Activated CD8-positive, alpha-beta T cell treated with anti-CD3 and anti-CD28 coated beads for 36 hours (primary cell): ENCODE measurements at regions of chr10 and their contacts with region 1.

Region 1: DNA sequence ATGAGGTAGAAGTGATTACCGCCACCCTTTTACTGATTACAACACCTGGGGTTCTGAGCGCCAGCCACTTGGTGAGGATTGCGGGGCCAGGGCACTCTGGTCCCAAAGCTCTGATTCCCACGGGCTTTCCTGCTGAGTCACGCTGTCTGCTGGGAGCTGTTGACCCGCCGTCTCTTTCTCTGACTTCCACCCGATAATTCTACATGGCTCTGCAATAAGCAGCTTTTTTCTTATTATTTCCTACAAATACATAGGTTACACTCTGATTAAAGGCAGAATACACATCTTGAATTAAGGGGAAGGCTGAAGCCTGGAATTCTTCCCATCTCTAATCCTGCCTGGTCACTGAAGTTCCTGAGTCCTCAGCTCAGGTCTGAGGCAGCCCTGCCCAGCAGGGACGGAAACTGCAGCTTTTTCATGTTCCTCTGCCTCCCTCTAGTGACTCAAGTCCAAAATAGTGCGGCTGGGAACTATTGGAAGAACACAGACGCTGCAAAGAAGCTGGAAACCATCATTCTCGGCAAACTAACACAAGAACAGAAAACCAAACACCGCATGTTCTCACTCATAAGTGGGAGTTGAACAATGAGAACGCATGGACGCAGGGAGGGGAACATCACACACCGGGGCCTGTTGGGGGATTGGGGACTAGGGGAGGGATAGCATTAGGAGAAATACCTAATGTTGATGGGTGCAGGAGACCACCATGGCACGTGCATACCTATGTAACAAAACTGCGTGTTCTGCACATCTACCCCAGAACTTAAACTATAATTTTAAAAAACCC is 178.3 kb downstream of the PRKCQ start:
- DNase-seq: peak; percentile 71
- ATAC-seq: peak; percentile 83
- H3K4me3 Mint-ChIP-seq: peak overlapping the region; percentile 1
- H3K27ac Mint-ChIP-seq: no peak overlapping the region
- H3K4me1 Mint-ChIP-seq: peaks cover 37% of the 10 kb centered on the region
- H3K27me3 Mint-ChIP-seq: peaks cover 4% of the 10 kb centered on the region
- CTCF ChIP-seq: peak; percentile 67

Region 2: GRCh38 chr10:6108603-6109443 is 292.9 kb before region 1 on chr10:
- CTCF ChIA-PET with region 1: interaction called, 66 read pairs
- POLR2A ChIA-PET with region 1: no interaction called
- intact Hi-C with region 1: loop called (anchors 2 kb)
- DNase-seq: peak; percentile 32
- ATAC-seq: peak; percentile 76
- H3K4me3 Mint-ChIP-seq: no peak overlapping the region
- H3K27ac Mint-ChIP-seq: peak overlapping the region; percentile 86
- H3K4me1 Mint-ChIP-seq: peaks cover 36% of the 10 kb centered on the region
- H3K27me3 Mint-ChIP-seq: no peaks in the 10 kb centered on the region
- CTCF ChIP-seq: peak; percentile 93

Region 3: GRCh38 chr10:6163364-6164270 is 238.1 kb before region 1 on chr10:
- CTCF ChIA-PET with region 1: interaction called, 13 read pairs
- POLR2A ChIA-PET with region 1: no interaction called
- intact Hi-C with region 1: no loop called
- DNase-seq: peak; percentile 90
- ATAC-seq: peak; percentile 97
- H3K4me3 Mint-ChIP-seq: peak overlapping the region; percentile 93
- H3K27ac Mint-ChIP-seq: peak overlapping the region; percentile 93
- H3K4me1 Mint-ChIP-seq: peaks cover 57% of the 10 kb centered on the region
- H3K27me3 Mint-ChIP-seq: no peaks in the 10 kb centered on the region
- CTCF ChIP-seq: no peak

Region 4: GRCh38 chr10:6232846-6233724 is 168.7 kb before region 1 on chr10:
- CTCF ChIA-PET with region 1: interaction called, 24 read pairs
- POLR2A ChIA-PET with region 1: interaction called, 3 read pairs
- intact Hi-C with region 1: no loop called
- DNase-seq: no peak
- ATAC-seq: no peak
- H3K4me3 Mint-ChIP-seq: no peak overlapping the region
- H3K27ac Mint-ChIP-seq: no peak overlapping the region
- H3K4me1 Mint-ChIP-seq: peaks cover 6% of the 10 kb centered on the region
- H3K27me3 Mint-ChIP-seq: no peaks in the 10 kb centered on the region
- CTCF ChIP-seq: no peak

Region 5: DNA sequence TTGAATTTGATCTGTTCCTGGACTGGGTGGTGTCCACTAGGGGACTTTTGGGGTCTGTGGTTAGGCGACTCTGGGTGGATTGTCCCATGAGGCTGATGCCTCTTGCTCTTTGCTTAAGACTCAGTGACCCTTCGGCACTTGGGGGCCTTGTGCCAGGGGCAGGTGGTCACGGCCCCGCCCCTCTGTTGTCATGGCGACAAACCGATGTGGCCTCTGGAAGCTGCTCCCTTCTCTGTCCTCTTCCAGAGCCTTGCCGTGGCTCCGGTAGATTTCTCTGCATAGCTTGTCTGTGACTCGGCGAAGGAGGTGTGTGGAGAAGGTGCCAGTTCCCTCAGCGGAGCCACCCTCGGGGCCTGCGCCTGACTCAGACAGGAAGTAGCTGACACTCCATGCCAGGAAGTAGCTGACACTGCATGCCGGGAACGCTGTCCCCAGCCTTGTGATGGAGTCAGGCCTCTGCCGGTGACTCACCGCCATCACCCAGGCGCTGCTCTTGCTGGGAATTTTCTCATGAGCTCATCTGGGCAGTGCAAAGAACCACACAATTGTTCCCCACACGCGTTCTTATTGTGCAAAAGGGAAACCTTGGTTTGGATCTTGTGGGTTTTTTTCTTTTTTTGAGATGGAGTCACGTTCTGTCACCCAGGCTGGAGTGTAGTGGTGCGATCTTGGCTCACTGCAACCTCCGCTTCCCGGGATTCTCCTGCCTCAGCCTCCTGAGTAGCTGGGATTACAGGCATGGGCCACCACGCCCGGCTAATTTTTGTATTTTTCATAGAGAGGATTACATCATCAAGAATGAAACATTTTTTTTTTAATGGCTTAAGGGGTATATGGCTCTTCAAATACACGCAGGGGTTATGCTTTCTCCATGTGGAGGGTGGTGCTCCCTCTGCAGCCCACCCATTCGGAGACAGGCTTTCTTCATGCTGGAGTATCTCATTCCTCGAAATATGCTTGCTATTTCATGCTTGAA is 126.4 kb before region 1 on chr10:
- CTCF ChIA-PET with region 1: interaction called, 13 read pairs
- POLR2A ChIA-PET with region 1: no interaction called
- intact Hi-C with region 1: no loop called
- DNase-seq: peak; percentile 96
- ATAC-seq: peak; percentile 85
- H3K4me3 Mint-ChIP-seq: peak overlapping the region; percentile 72
- H3K27ac Mint-ChIP-seq: peak overlapping the region; percentile 96
- H3K4me1 Mint-ChIP-seq: peaks cover 49% of the 10 kb centered on the region
- H3K27me3 Mint-ChIP-seq: no peaks in the 10 kb centered on the region
- CTCF ChIP-seq: no peak

Region 6: DNA sequence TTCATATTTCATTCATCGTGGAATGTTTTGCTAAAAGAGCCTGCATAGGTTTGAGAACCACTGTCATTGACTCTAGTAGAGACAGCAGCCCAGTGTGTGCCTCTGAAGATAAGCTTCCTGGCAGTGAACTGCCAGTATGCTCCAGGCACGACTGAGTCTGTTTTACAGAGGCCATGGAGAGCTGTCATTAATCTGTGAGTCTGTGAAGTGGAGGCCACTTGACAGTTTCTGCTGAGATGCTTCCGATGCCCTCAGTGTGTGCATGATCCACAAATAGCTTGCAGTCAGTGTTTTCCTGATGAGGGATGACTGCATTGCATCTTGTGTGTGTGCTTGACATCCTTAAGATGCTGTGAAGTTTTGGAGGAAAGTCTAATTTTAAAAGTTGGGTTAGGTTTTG is 36.9 kb before region 1 on chr10:
- CTCF ChIA-PET with region 1: interaction called, 15 read pairs
- POLR2A ChIA-PET with region 1: no interaction called
- intact Hi-C with region 1: no loop called
- DNase-seq: no peak
- ATAC-seq: no peak
- H3K4me3 Mint-ChIP-seq: no peak overlapping the region
- H3K27ac Mint-ChIP-seq: no peak overlapping the region
- H3K4me1 Mint-ChIP-seq: no peaks in the 10 kb centered on the region
- H3K27me3 Mint-ChIP-seq: no peaks in the 10 kb centered on the region
- CTCF ChIP-seq: no peak

Region 7: GRCh38 chr10:6482737-6483357 is 81.1 kb after region 1 on chr10:
- CTCF ChIA-PET with region 1: no interaction called
- POLR2A ChIA-PET with region 1: no interaction called
- intact Hi-C with region 1: no loop called
- DNase-seq: no peak
- ATAC-seq: no peak
- H3K4me3 Mint-ChIP-seq: no peak overlapping the region
- H3K27ac Mint-ChIP-seq: peak overlapping the region; percentile 78
- H3K4me1 Mint-ChIP-seq: peaks cover 64% of the 10 kb centered on the region
- H3K27me3 Mint-ChIP-seq: no peaks in the 10 kb centered on the region
- CTCF ChIP-seq: no peak

Region 8: DNA sequence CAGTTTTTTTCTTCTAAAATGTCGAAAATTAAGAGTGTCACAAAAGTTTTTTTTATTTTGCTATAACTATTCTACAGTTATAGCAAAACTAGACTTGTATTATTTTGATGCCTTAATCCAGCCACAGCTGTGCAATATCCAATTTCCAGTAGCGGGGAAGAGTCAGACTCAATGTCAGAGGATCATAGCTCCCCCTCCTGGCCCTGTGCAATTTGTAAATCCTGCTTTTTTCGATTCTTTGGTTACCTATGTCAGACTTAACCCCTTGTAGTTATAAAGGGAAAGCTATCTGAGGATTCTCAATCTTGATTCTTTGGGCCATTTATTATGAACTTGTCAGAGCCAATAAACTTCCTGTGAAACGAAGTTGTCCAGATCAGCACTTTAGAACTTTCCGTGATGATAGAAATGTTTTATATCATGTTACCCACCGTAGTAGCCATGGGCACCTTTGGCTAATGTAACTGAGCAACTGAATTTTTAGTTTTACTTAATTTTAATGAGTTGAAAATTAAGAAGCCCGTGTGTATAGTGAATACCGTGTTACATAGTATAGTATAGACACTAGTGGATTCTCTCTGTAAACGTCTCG is 266.0 kb after region 1 on chr10:
- CTCF ChIA-PET with region 1: interaction called, 66 read pairs
- POLR2A ChIA-PET with region 1: no interaction called
- intact Hi-C with region 1: no loop called
- DNase-seq: peak; percentile 74
- ATAC-seq: peak; percentile 38
- H3K4me3 Mint-ChIP-seq: no peak overlapping the region
- H3K27ac Mint-ChIP-seq: no peak overlapping the region
- H3K4me1 Mint-ChIP-seq: peaks cover 24% of the 10 kb centered on the region
- H3K27me3 Mint-ChIP-seq: no peaks in the 10 kb centered on the region
- CTCF ChIP-seq: peak; percentile 88